ENCODE measurements at regions of chr5 and their contacts with region 1.

Region 1: GRCh38 chr5:150789943-150790611 is 11.5 kb downstream of the SMIM3 start:
- DNase-seq: peak; percentile 100
- H3K4me3 ChIP-seq: peak overlapping the region; percentile 26 to 50 (median 37)
- H3K27ac ChIP-seq: peak overlapping the region; percentile 98
- H3K4me1 ChIP-seq: peaks cover 40% of the 10 kb centered on the region
- H3K27me3 ChIP-seq: no peaks in the 10 kb centered on the region
- CTCF ChIP-seq: no peak

Region 2: DNA sequence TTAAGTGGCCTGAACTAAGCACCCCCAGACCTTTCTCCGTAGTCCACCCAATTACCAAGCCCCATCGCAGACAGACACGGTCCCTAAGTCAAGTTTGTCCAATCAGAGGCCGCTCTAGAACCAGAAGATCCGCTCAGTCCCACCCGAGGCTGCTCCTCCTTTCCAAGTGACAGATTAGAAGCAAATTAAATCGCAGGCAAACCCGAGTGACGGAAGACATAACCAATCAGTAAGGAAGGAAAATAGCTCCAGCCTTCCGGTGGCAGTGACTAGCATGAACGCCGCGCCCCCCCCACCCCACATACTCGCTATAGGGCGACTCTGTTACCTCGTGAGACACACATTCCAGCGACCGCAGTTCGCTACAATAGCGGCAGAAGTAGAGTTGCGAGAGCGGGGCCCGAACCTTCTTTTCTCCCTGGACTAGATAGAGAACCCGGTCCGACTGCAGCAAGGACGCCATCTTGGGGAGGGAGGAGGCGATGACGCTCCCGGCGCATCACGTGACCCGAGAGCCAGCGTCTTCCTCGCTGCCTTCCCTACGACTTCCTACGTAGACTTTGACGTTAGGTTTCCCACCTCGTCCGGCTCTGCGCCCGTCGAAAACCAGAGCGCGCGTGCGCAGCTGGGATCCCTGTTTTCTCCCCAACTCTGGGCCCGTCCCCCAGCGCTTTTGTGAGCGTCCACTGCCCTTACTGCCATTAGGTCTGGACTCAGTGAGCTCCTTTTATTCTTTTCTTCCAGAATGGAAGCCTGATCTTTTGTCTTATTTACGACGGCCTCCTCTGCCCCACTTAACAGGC is 31.3 kb before region 1 on chr5 and contains the start of gene DCTN4:
- CTCF ChIA-PET with region 1: no interaction called
- dilution Hi-C with region 1: no loop called
- in situ Hi-C with region 1: no loop called
- intact Hi-C with region 1: loop called (anchors 5 kb)
- DNase-seq: peak; percentile 100
- H3K4me3 ChIP-seq: peak within 1 kb of the TSS; percentile 73 to 75 (median 74)
- H3K27ac ChIP-seq: peak within 1 kb of the TSS; percentile 93
- H3K4me1 ChIP-seq: peaks cover 23% of the 10 kb centered on the region
- H3K27me3 ChIP-seq: no peaks in the 10 kb centered on the region
- CTCF ChIP-seq: no peak
- total RNA-seq, gene DCTN4: 64.7 to 70.9 TPM

Measured in mammary epithelial cell (primary cell).